ENCODE measurements at regions of chr20 and their contacts with region 1.

Region 1: DNA sequence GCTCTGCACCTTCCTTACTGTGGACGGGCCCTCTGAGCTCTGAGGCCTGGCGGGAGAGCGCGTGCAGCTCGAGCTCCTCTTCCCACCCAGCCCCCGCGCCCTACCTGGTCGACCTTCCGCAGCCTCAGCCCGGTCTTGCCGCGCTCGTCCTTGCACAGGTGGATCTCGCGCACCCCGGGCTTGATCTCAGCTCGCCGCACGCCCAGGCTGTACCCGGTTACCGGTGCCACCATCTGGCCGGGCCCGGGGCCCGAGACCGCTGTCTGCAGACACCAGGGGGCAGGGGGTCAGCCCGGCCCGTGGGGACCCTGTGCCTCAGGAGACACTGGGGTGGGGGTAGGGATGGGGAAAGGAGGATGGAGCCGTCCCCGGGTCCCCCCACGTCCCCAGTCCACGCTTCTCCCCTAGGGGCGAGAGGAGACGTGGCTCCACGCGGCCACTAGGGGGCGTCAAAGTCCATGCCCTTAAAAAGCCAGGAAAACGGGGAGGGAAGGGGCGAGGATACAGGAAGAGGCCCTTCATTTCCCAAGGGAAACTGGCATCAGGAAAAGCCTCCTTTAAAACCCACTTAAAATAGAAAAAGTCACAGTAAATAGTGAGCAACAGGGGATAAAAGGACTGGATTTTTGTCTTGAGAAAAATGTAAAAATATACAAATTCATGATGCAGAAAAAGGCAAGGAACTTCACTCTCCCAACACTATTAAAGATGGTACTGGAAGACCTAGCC is 15.5 kb downstream of the SDCBP2 start:
- DNase-seq: peak; percentile 62 to 93
- H3K4me3 ChIP-seq: no peak overlapping the region
- CTCF ChIP-seq: peak in 1 of 3 donors; percentile 59
- POLR2A ChIP-seq: no peak

Region 2: DNA sequence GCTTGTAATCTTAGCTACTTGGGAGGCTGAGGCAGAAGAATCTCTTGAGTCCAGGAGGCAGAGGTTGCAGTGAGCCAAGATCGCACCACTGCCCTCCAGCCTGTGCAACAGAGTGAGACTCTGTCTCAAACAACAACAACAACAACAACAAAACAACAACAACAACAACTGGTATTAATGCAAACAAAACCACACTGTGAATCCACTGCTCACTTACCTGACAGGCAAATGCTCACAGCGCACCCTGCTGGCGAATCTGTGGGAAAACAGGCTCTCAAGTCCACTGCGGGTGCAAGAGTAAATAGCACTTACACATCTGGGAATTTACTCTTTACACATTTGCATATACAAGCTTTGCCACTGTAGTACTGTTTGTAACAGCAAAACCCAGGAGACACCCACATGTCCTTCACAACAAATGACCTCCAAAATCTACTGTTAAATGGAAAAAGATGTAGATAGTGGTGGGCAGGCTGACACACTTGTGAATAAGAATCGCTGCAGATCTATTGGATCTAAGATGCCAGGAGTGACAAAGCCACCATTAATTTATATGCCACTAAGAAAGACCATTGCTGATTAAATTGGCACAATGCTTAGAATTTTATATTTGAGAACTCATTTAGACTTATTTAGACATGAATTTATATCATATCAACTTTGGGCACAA is 124.0 kb after region 1 on chr20:
- intact Hi-C with region 1: loop called (anchors 5 kb)
- DNase-seq: peak; percentile 50 to 94
- H3K4me3 ChIP-seq: no peak overlapping the region
- CTCF ChIP-seq: peak in 1 of 3 donors; percentile 79
- POLR2A ChIP-seq: no peak

Region 3: DNA sequence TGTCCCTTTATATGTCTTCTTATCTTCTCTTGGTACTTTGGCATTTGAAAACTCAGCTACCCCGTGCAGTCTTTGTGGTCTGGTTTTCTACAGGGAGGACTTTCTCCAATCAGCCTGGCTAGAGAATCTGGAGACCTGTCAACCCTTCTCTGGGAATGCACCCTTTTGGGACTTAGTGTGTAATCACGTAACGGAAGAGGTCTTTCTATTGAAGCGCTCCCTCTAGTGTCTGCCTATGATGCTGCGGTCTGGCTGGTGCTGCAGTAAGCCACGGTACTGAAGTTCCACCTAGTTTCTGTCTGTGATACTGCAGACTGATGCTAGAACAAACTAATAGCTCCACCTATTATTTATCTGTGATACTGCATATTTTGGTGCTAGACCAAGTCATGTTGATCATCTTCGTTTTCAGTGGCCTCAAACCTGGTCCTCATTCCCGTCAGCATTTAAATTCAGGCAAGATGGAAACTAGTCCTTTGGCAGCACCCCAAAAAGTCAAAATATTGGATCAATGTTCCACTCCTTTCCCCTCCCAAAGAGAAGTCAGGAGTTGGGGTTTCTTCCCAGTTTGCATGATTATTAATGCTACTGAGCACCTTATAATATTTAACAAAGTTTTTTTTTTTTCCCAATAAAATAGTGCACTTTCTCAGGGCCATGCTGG is 190.3 kb after region 1 on chr20:
- intact Hi-C with region 1: loop called (anchors 10 kb)
- DNase-seq: peak in 1 of 2 donors; percentile 80
- H3K4me3 ChIP-seq: no peak overlapping the region
- CTCF ChIP-seq: peak in 1 of 3 donors; percentile 87
- POLR2A ChIP-seq: no peak

Measured in lower leg skin (tissue), 4 donors.